Caco-2 (cell line): ENCODE measurements at regions of chr2 and their contacts with region 1.

Region 1: GRCh38 chr2:174522553-174522952 is 35.7 kb upstream of the GPR155 start:
- DNase-seq: no peak
- H3K4me3 ChIP-seq: no peak overlapping the region
- H3K4me3 Mint-ChIP-seq: no peak overlapping the region
- H3K27ac Mint-ChIP-seq: no peak overlapping the region
- H3K4me1 ChIP-seq: no peaks in the 10 kb centered on the region
- H3K4me1 Mint-ChIP-seq: peaks cover 7% of the 10 kb centered on the region
- H3K27me3 ChIP-seq: no peaks in the 10 kb centered on the region
- H3K27me3 Mint-ChIP-seq: peaks cover 4% of the 10 kb centered on the region
- CTCF ChIP-seq: peak; percentile 26 to 30

Region 2: DNA sequence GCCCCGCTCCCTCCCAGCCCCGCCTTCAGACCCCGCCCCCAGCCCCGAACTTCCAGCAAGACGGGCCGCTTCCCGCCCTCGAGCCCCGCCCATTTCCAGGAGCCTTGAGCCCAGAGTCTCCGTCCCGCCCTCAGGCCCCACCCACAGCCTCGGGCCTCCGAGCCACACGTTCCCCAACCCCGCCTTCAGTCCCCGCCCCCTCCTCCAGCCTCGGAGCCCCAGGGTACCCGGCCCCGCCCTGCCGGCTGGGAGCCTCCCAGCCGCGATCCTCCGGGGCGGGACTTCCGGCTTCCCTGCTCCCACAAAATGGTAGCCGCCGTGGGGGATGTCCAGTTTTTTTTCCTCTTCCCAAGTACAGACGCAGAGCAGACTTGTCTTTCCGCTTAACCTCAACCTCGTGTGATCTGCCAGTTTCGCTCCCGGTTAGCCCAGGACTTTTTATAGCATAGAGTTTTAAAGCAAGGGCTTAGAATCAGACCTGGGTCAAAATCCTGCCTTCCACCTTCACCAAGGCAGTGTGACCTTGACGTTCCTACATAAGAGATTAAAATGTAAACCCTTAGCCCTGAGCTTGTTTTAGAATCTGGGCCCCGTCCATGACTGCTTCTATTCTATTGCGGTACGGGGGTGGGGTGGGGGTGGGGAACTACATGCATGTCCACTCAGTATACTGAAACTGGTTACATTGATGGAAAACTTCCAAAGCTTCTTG is 35.3 kb before region 1 on chr2:
- CTCF ChIA-PET with region 1: no interaction called
- POLR2A ChIA-PET with region 1: no interaction called
- intact Hi-C with region 1: loop called (anchors 1 kb)
- DNase-seq: peak; percentile 97 to 100
- H3K4me3 ChIP-seq: peak overlapping the region; percentile 94
- H3K4me3 Mint-ChIP-seq: peak overlapping the region; percentile 84
- H3K27ac Mint-ChIP-seq: peak overlapping the region; percentile 74
- H3K4me1 ChIP-seq: peaks cover 14% of the 10 kb centered on the region
- H3K4me1 Mint-ChIP-seq: peaks cover 4% of the 10 kb centered on the region
- H3K27me3 ChIP-seq: no peaks in the 10 kb centered on the region
- H3K27me3 Mint-ChIP-seq: peaks cover 12% of the 10 kb centered on the region
- CTCF ChIP-seq: no peak